Head of caudate nucleus (tissue), 42 donors: ENCODE measurements at regions of chr16 and their contacts with region 1.

Region 1: DNA sequence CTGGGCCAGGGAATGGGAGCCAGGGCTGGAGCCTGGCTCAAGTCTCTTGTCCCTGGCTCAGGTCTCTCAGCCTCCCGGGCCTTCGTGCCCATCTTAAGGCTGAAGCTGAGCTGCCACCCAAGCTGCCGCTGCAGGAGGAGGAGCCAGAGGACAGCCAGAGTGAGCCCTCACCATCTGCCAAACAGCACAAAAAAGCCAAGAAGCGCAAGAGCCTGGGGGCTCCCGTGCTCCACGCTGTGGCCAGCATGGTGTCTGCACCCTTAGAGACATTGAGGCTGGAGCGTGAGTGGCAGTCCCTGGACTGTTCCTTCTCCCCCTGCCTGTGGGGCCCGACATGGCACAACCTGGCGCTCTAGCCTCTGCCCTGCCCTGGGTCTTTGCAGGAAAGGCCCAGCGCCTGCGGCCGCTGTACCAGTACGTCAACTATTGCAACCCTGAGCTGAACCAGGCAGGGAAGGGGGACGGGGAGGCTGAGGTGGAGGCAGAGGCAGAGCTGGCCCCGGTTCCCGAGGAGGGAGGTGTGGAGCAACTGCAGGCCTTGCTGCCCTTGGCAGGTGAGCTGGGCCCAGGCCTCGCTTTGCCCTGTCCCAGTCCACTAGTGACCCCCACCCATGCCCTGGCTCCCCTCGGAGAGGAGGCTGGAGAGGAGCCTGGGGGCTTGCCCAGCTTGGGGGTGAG is 1.3 kb downstream of the C16orf86 start:
- DNase-seq: peak; percentile 72 to 94 (median 84)

Region 2: DNA sequence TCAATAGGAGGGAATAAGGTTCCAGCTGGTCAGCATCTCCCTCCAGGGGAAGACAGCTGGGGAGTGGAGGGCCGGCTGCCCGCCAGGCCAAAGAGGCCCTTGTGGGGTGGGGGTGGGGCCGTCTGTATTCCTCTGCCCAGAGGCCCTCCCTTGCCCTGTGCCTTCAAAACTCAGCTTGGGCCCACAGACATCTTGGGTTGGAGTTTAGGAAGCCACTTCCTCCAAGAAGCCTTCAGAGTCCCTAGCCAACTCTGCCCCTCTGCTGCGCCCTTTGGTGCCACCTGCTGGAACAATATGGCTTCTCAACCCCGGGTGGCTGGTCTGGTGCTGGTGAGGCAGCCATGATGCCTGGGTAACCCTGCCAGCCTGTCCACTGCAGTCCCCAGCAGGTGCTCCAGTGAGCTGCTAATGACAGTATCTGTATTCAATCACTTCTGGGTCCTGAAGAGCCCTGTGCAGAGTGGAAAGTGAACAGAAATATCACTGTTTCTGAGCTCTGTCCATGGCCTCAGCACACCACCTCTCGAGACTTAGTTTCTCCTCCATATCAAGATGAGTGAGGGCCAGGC is 220.4 kb before region 1 on chr16:
- intact Hi-C with region 1: no loop called
- DNase-seq: peak in 16 of 42 donors; percentile 19 to 73 (median 40)

Region 3: GRCh38 chr16:67521095-67521804 is 146.7 kb before region 1 on chr16:
- intact Hi-C with region 1: loop called (anchors 5 kb)
- DNase-seq: peak; percentile 88 to 98 (median 96)

Region 4: DNA sequence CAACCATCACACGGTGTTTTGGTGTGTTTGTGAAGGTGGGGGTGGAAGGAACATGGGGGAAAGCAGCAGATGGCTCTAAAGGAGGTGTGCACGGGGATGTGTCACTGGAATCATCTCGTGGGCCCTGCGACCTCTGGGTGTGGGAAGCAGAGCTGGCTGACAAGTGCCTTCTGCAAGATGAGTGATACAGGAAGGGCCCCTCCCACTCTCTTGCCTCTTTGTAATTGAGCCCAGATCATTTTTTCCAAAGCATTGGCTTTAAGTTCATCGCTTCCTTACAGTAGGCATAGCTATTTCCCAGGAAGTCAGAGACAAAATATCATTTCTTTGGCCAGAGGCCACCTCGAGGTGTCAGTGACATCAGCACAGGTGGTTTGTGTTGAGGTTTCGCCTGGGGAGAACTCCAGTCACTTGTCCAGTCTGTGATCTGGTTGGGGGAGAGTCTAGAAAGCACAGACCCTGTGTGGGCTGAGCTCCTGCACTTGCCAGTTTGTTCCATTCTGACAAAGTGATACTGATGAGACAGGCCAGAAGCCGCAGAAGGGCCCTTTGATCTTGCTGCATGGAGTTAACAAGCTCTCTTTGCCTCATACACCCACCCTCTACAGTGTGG is 1498.4 kb after region 1 on chr16:
- intact Hi-C with region 1: no loop called
- DNase-seq: peak in 33 of 42 donors; percentile 18 to 75 (median 48)